ENCODE measurements at regions of chr1 and their contacts with region 1.

Region 1: DNA sequence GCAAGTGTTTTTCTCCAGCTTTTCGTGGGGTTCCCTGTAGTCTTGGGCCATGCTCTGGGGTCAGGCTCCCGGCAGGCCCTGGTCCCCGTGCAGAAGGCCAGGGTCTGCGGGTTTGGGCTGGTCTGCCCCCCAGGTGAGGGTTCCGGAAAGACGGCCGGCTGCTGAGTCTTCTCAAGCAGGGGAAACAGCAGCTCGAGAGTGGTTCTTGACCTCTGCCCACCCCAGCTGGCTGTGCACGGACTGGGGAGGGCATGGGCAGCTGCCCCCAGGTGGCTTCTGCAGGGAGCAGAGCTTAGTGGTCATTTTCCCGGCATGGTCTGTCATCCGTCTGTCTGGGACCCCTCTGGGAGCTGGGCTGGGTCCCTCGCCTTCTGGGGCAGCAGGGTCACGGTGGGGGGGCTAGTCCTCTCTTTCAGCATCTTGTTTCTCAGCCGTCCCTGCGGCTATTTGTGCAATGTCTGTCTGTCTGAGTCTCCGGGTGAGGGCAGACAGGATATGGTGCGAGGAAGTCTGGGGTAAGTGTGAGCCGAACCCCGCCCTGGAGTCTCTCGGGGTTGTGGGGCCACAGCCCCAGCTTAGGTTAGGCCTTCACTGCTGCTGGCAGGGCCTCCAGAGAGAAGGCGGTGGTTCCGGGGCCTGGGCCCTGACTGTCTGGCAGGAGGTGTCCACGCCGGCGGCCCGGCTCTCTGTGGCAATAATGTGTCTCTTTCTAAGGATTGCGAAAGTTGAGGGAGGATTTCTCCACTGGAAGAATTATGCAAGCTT is 6.1 kb downstream of the SKI start:
- DNase-seq: peak; percentile 62 to 94 (median 83)
- ATAC-seq: peak; percentile 55
- H3K4me3 ChIP-seq: peak overlapping the region; percentile 25 to 82
- H3K4me3 Mint-ChIP-seq: peak overlapping the region; percentile 98
- H3K27ac ChIP-seq: peak overlapping the region; percentile 54 to 80
- H3K27ac Mint-ChIP-seq: peak overlapping the region; percentile 98
- H3K4me1 ChIP-seq: peaks cover 83% of the 10 kb centered on the region
- H3K4me1 Mint-ChIP-seq: peaks cover 71% of the 10 kb centered on the region
- H3K27me3 ChIP-seq: no peaks in the 10 kb centered on the region
- H3K27me3 Mint-ChIP-seq: no peaks in the 10 kb centered on the region
- CTCF ChIP-seq: no peak

Region 2: GRCh38 chr1:2290595-2291510 is 56.7 kb after region 1 on chr1:
- CTCF ChIA-PET with region 1: interaction called, 4 read pairs
- POLR2A ChIA-PET with region 1: interaction called, 11 read pairs
- intact Hi-C with region 1: loop called in 1 of 2 experiments (anchors 2 kb)
- DNase-seq: peak; percentile 44 to 91 (median 77)
- ATAC-seq: peak; percentile 65
- H3K4me3 ChIP-seq: peak overlapping the region; percentile 50 to 54
- H3K4me3 Mint-ChIP-seq: peak overlapping the region; percentile 80
- H3K27ac ChIP-seq: peak overlapping the region; percentile 58 to 60
- H3K27ac Mint-ChIP-seq: peak overlapping the region; percentile 95
- H3K4me1 ChIP-seq: peaks cover 88% of the 10 kb centered on the region
- H3K4me1 Mint-ChIP-seq: peaks cover 83% of the 10 kb centered on the region
- H3K27me3 ChIP-seq: no peaks in the 10 kb centered on the region
- H3K27me3 Mint-ChIP-seq: no peaks in the 10 kb centered on the region
- CTCF ChIP-seq: no peak

Region 3: DNA sequence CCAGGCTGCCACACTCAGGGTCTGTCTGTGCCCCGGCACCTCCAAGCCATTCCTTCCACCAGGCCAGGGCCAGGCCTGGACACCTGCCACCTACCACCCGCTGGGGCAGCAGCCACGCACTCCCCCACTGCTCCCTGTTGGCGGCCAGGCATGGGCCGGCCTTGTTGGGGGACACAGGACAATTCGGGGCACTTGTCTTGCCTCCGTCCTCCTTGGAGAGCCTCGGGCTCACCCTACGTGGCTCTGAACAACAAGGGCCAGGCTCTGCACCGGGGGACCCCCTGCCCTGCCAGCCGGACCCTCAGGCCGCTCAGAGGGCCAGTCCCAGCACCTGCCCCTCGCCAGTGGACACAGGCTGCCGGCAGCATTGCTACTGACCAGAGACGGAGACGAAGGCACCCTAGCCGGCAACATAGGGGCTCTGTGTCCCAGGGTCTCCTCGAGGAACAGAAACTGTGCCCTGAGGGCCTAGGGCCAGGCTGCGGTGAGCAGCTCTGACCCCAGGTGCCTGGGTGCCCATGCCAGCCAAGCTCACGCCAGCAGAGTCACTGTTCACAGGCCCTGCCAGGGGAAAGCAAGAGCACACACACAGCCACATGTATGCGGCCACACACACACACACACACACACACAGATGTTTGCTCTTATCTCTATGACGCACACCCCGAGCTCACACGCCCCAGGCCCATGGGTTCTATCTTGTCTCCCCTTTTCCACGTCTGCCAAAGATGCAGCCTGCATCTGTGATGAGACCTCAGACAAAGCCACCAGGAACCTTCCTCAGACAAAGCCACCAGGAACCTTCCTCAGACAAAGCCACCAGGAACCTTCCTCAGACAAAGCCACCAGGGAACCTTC is 111.3 kb after region 1 on chr1:
- CTCF ChIA-PET with region 1: no interaction called
- POLR2A ChIA-PET with region 1: no interaction called
- intact Hi-C with region 1: no loop called
- DNase-seq: no peak
- ATAC-seq: no peak
- H3K4me3 ChIP-seq: no peak overlapping the region
- H3K4me3 Mint-ChIP-seq: no peak overlapping the region
- H3K27ac ChIP-seq: no peak overlapping the region
- H3K27ac Mint-ChIP-seq: no peak overlapping the region
- H3K4me1 ChIP-seq: no peaks in the 10 kb centered on the region
- H3K4me1 Mint-ChIP-seq: no peaks in the 10 kb centered on the region
- H3K27me3 ChIP-seq: no peaks in the 10 kb centered on the region
- H3K27me3 Mint-ChIP-seq: no peaks in the 10 kb centered on the region
- CTCF ChIP-seq: no peak

Measured in CD8-positive, alpha-beta T cell (primary cell).